Head of caudate nucleus (tissue), 42 donors: ENCODE measurements at regions of chr10 and their contacts with region 1.

Region 1: GRCh38 chr10:71817831-71818655 is 33.0 kb downstream of the PSAP start:
- DNase-seq: peak in 15 of 42 donors; percentile 33 to 72 (median 55)

Region 2: GRCh38 chr10:71531485-71532446 is 286.3 kb before region 1 on chr10:
- intact Hi-C with region 1: no loop called
- DNase-seq: no peak

Region 3: GRCh38 chr10:71899665-71900412 is 81.8 kb after region 1 on chr10:
- intact Hi-C with region 1: loop called (anchors 5 kb)
- DNase-seq: no peak

Region 4: DNA sequence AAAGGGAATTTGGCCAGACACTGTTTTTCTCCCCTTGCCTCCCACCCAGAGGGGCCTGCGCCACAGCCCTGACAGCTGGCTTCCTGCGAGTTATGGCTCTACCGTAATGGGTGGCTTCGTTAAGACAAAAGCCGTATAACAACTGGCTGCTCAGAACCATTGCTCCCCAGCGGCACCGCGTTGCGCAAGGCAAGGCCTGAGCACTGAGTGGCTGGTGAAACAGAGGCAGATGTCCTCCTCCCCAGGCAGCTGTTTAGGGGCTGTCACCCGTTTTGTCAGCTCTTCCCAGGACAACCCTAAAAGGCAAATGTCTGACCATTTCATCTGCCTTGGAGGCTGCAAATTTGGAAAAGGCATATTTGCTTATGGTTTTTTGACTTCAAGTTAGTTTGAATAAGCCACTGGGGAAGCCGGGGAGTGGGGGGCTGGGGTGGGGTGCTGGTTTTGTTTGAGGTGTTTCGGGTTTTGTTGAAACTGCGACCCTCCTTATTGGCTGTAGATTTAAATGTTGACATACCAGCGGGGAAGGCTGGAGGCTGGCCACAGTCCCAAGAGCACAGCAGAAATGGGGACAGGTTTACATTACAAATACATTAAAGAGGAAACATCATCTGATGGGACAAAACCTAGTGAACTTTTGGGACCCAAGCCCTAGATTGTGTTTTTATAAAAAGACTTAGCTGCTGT is 271.0 kb after region 1 on chr10:
- intact Hi-C with region 1: no loop called
- DNase-seq: peak in 35 of 42 donors; percentile 32 to 79 (median 58)